Activated naive CD4-positive, alpha-beta T cell treated with anti-CD3 and anti-CD28 coated beads, Interleukin-2, amount 10 ng/mL, durations not matched to agents 7 days and 5 days (primary cell): ENCODE measurements at regions of chr4 and their contacts with region 1.

Region 1: GRCh38 chr4:112231779-112232713 is at the start of gene AP1AR:
- DNase-seq: peak; percentile 85
- H3K4me3 Mint-ChIP-seq: peak within 1 kb of the TSS; percentile 78
- H3K27ac Mint-ChIP-seq: peak within 1 kb of the TSS; percentile 99
- H3K4me1 Mint-ChIP-seq: peaks cover 28% of the 10 kb centered on the region
- H3K27me3 Mint-ChIP-seq: peaks cover 9% of the 10 kb centered on the region

Region 2: GRCh38 chr4:112214390-112215264 is 17.4 kb before region 1 on chr4:
- CTCF ChIA-PET with region 1: interaction called, 18 read pairs
- DNase-seq: no peak
- H3K4me3 Mint-ChIP-seq: no peak overlapping the region
- H3K27ac Mint-ChIP-seq: no peak overlapping the region
- H3K4me1 Mint-ChIP-seq: peaks cover 5% of the 10 kb centered on the region
- H3K27me3 Mint-ChIP-seq: peaks cover 6% of the 10 kb centered on the region

Region 3: DNA sequence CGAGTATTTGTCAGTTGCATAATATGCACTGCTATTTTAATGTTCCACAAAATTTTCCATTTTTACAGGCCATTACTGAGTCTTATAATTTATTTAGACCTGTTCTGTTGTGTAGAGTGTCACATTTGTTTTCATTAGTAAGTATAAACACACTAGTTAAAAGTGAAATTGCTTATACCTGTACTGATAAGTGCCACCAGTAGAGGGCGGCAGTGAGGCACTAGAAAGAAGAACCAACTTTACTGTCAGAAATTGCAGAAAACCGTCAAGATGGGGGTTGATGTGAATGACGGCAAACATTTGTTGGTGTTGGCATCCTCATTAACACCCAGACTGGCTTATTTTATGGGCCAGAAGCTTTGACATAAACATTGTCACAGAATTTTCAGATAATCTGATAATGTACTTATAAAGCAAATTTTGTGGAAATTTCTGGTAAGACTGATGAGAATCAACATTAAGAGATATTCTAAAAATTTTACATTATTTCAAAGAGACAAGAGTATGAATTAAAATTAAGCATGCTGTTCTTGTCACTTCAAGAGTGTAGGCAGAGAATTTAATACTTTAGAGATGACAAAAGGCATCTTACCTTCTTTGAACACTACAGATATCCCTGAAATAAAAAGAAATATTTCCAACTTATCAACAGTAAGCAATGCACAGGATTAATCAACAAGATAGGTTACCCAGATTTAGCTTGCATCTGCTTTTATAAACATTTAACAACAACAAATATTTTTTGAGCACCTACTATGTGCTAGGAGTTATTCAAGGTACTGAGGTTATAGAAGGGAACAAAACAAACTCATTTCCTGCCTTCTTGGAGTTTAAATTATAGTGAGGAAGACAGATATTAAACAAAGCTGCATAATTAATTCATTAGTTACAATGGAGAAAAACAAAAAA is 90.0 kb after region 1 on chr4:
- CTCF ChIA-PET with region 1: no interaction called
- DNase-seq: peak; percentile 85
- H3K4me3 Mint-ChIP-seq: no peak overlapping the region
- H3K27ac Mint-ChIP-seq: no peak overlapping the region
- H3K4me1 Mint-ChIP-seq: peaks cover 10% of the 10 kb centered on the region
- H3K27me3 Mint-ChIP-seq: no peaks in the 10 kb centered on the region